ENCODE measurements at regions of chr5 and their contacts with region 1.

Region 1: GRCh38 chr5:126594676-126595485 is at the start of gene ALDH7A1:
- DNase-seq: peak; percentile 69 to 75
- ATAC-seq: peak; percentile 90
- H3K4me3 ChIP-seq: peak within 1 kb of the TSS; percentile 51 to 85 (median 70)
- H3K27ac ChIP-seq: peak within 1 kb of the TSS; percentile 21 to 69 (median 50)
- H3K4me1 ChIP-seq: peaks cover 8 to 10% of the 10 kb centered on the region in 2 donors
- H3K27me3 ChIP-seq: no peaks in the 10 kb centered on the region
- CTCF ChIP-seq: peak in 2 of 5 experiments; percentile 19 to 41
- POLR2A ChIP-seq: peak in 1 of 2 donors; percentile 46
- total RNA-seq, gene ALDH7A1: 2.7 to 6.3 (median 4.7) TPM

Region 2: GRCh38 chr5:126610160-126610559 is 15.3 kb after region 1 on chr5:
- in situ Hi-C with region 1: no loop called
- intact Hi-C with region 1: loop called (anchors 1 kb)
- DNase-seq: no peak
- ATAC-seq: no peak
- H3K4me3 ChIP-seq: no peak overlapping the region
- H3K27ac ChIP-seq: no peak overlapping the region
- H3K4me1 ChIP-seq: peaks cover 15 to 28% of the 10 kb centered on the region in 2 donors
- H3K27me3 ChIP-seq: no peaks in the 10 kb centered on the region
- CTCF ChIP-seq: no peak
- POLR2A ChIP-seq: no peak

Region 3: DNA sequence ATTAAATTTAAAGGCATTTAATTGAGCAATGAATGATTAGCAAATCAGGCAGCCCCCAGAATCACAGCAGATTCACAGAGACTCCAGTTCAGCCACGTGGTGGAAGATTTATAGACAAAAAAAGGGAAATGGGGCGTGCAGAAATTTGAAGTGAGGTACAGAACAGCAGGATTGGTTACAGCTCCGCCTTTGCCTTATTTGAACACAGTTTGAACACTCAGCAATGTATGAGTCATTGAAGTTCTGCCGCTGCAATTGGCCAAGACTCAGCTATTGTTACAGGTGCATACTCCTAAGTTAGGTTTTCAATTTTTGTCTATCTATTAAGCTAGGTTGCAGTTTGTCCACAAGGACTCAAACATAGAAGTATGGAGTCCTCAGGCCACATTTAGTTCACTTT is 1331.0 kb after region 1 on chr5:
- in situ Hi-C with region 1: no loop called
- intact Hi-C with region 1: no loop called
- DNase-seq: no peak
- ATAC-seq: no peak
- H3K4me3 ChIP-seq: no peak overlapping the region
- H3K27ac ChIP-seq: no peak overlapping the region
- H3K4me1 ChIP-seq: no peaks in the 10 kb centered on the region
- H3K27me3 ChIP-seq: no peaks in the 10 kb centered on the region
- CTCF ChIP-seq: no peak
- POLR2A ChIP-seq: no peak